ENCODE measurements at regions of chr17 and their contacts with region 1.

Region 1: GRCh38 chr17:49230636-49231562 is at the start of gene PHOSPHO1:
- DNase-seq: peak; percentile 70 to 94 (median 82)
- ATAC-seq: peak; percentile 93
- H3K4me3 ChIP-seq: peak within 1 kb of the TSS; percentile 78
- H3K4me3 Mint-ChIP-seq: peak within 1 kb of the TSS; percentile 84
- H3K27ac ChIP-seq: no peak within 1 kb of the TSS
- H3K27ac Mint-ChIP-seq: peak within 1 kb of the TSS; percentile 19
- H3K4me1 ChIP-seq: peaks cover 28% of the 10 kb centered on the region
- H3K4me1 Mint-ChIP-seq: peaks cover 11% of the 10 kb centered on the region
- H3K27me3 ChIP-seq: peaks cover 12 to 16% of the 10 kb centered on the region in 2 experiments
- H3K27me3 Mint-ChIP-seq: peaks cover 16% of the 10 kb centered on the region
- CTCF ChIP-seq: no peak
- total RNA-seq, gene PHOSPHO1: not detected

Region 2: DNA sequence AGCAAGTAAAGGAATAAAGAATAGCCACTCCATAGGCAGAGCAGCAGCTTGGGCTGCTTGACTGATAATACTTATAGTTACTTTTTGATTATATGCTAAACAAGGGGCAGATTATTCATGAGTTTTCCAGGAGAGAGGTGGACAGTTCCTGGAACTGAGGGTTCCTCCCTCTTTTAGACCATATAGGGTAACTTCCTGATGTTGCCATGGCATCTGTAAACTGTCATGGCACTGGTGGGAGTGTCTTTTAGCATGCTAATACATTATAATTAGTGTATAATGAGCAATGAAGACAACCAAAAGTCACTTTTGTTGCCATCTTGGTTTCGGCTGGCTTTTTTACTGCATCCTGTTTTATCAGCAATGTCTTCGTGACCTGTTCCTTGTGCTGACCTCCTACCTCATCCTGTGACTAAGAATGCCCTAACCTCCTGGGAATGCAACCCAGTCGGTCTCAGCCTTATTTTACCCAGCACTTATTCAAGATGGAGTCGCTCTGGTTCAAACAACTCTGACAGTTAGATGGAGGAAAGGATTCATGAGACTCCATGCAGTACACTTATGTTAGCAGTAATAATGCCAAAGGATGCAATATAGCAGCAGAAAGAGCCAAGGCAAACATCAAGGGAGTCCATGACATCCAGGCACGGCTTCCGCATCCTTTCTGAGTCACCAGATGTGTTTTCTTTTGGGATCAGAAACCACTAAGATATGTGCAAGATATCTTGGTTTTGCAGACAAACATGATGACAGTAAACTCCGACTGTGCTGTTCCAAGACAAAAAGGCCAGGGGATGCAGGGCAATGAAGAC is 154.1 kb before region 1 on chr17:
- CTCF ChIA-PET with region 1: no interaction called
- POLR2A ChIA-PET with region 1: no interaction called
- intact Hi-C with region 1: no loop called
- DNase-seq: no peak
- ATAC-seq: no peak
- H3K4me3 ChIP-seq: no peak overlapping the region
- H3K4me3 Mint-ChIP-seq: no peak overlapping the region
- H3K27ac ChIP-seq: no peak overlapping the region
- H3K27ac Mint-ChIP-seq: no peak overlapping the region
- H3K4me1 ChIP-seq: no peaks in the 10 kb centered on the region
- H3K4me1 Mint-ChIP-seq: no peaks in the 10 kb centered on the region
- H3K27me3 ChIP-seq: peaks cover 5 to 13% of the 10 kb centered on the region in 2 experiments
- H3K27me3 Mint-ChIP-seq: peaks cover 56% of the 10 kb centered on the region
- CTCF ChIP-seq: no peak

Region 3: DNA sequence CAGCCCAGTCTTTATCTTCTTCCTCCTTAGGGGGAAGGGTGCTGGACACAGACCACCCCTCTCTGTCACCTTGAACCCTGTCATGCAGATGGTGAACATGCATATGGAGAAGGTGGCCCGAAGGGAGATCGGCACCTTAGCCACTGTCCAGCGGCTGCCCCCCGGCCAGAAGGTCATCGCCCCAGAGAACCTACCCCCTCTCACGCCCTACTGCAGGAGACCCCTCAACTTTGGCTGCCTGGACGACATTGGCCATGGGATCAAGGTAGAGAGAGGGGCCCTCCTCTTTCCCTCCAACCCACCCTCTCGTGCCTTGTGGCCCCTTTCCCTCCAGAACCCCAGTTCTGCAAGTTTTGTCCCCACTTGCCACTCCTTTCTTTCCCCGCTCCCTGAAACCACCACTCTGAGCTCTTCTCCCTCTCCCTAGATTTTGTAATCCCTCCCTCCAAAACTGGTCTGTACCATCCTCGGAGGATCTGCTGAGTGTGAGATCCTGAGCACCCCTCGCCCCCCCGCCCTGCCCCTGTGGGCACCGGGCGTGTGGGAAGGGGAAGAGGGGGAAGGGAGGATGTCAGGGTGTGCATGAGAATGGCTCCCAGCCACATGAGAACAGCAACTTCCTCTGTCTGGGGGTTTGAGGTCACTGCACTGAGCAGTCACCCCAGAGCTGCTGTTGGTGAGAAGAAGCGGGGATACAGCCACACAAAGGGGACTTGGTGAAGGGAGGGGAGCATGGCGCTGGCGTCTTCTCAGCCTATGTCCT is 13.1 kb before region 1 on chr17:
- CTCF ChIA-PET with region 1: interaction called, 10 read pairs
- POLR2A ChIA-PET with region 1: interaction called, 7 read pairs
- intact Hi-C with region 1: no loop called
- DNase-seq: peak; percentile 44 to 93 (median 62)
- ATAC-seq: peak; percentile 84
- H3K4me3 ChIP-seq: peak overlapping the region; percentile 32
- H3K4me3 Mint-ChIP-seq: peak overlapping the region; percentile 85
- H3K27ac ChIP-seq: peak overlapping the region; percentile 63 to 64
- H3K27ac Mint-ChIP-seq: peak overlapping the region; percentile 96
- H3K4me1 ChIP-seq: peaks cover 78% of the 10 kb centered on the region
- H3K4me1 Mint-ChIP-seq: peaks cover 64% of the 10 kb centered on the region
- H3K27me3 ChIP-seq: no peaks in the 10 kb centered on the region
- H3K27me3 Mint-ChIP-seq: no peaks in the 10 kb centered on the region
- CTCF ChIP-seq: no peak

Region 4: DNA sequence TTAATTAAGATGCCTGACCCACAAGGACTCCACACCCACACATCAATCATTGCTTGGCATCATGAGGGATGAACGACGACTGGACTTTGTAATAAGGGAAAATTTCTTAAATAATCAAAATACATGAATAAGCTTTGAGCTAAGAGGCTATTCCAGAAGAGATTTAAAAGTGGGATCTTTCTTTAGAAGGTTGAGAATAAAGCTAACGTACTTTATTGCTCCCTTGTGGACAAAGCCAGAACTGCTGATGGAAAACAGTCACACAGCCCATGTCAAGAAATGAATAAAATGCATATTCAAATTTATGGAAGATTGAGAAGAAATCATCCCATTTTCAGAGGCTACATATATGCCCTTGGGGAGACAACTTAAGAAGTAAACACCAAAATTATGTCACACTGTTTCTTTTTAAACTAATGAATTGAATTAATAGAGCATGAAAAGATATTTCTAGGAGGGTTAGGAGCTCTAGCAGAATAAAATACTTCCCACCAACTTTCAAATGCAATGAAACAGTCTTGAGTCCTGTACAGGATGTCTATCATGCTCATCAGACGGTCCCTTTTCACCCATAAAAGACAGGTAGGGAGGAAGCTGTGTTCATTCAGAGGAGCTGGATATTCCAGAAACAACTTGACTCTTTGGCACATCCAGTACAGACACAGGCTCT is 59.9 kb after region 1 on chr17:
- CTCF ChIA-PET with region 1: interaction called, 3 read pairs
- POLR2A ChIA-PET with region 1: no interaction called
- intact Hi-C with region 1: loop called in 1 of 2 experiments (anchors 5 kb)
- DNase-seq: peak in 5 of 14 experiments; percentile 3 to 45 (median 11)
- ATAC-seq: peak; percentile 37
- H3K4me3 ChIP-seq: no peak overlapping the region
- H3K4me3 Mint-ChIP-seq: no peak overlapping the region
- H3K27ac ChIP-seq: no peak overlapping the region
- H3K27ac Mint-ChIP-seq: no peak overlapping the region
- H3K4me1 ChIP-seq: no peaks in the 10 kb centered on the region
- H3K4me1 Mint-ChIP-seq: no peaks in the 10 kb centered on the region
- H3K27me3 ChIP-seq: no peaks in the 10 kb centered on the region
- H3K27me3 Mint-ChIP-seq: no peaks in the 10 kb centered on the region
- CTCF ChIP-seq: peak; percentile 49

Region 5: GRCh38 chr17:49361902-49362722 is 131.2 kb after region 1 on chr17 and contains the start of gene ZNF652:
- CTCF ChIA-PET with region 1: no interaction called
- POLR2A ChIA-PET with region 1: no interaction called
- intact Hi-C with region 1: loop called in 1 of 2 experiments (anchors 2 kb)
- DNase-seq: peak; percentile 94 to 98 (median 97)
- ATAC-seq: peak; percentile 59
- H3K4me3 ChIP-seq: peak within 1 kb of the TSS; percentile 86
- H3K4me3 Mint-ChIP-seq: peak within 1 kb of the TSS; percentile 96
- H3K27ac ChIP-seq: peak within 1 kb of the TSS; percentile 61 to 87
- H3K27ac Mint-ChIP-seq: peak within 1 kb of the TSS; percentile 97
- H3K4me1 ChIP-seq: peaks cover 38% of the 10 kb centered on the region
- H3K4me1 Mint-ChIP-seq: peaks cover 56% of the 10 kb centered on the region
- H3K27me3 ChIP-seq: no peaks in the 10 kb centered on the region
- H3K27me3 Mint-ChIP-seq: no peaks in the 10 kb centered on the region
- CTCF ChIP-seq: no peak
- total RNA-seq, gene ZNF652: 33.7 to 34.9 TPM